ENCODE measurements at regions of chr11 and their contacts with region 1.

Region 1: GRCh38 chr11:125345421-125346178 is 150.5 kb downstream of the FEZ1 start:
- DNase-seq: peak; percentile 76
- H3K4me3 Mint-ChIP-seq: no peak overlapping the region
- H3K27ac Mint-ChIP-seq: no peak overlapping the region
- H3K4me1 Mint-ChIP-seq: peaks cover 6% of the 10 kb centered on the region
- H3K27me3 Mint-ChIP-seq: peaks cover 16% of the 10 kb centered on the region
- CTCF ChIP-seq: peak; percentile 81

Region 2: GRCh38 chr11:124152770-124153407 is 1192.7 kb before region 1 on chr11:
- CTCF ChIA-PET with region 1: no interaction called
- POLR2A ChIA-PET with region 1: no interaction called
- intact Hi-C with region 1: no loop called
- DNase-seq: no peak
- H3K4me3 Mint-ChIP-seq: no peak overlapping the region
- H3K27ac Mint-ChIP-seq: no peak overlapping the region
- H3K4me1 Mint-ChIP-seq: no peaks in the 10 kb centered on the region
- H3K27me3 Mint-ChIP-seq: peaks cover 23% of the 10 kb centered on the region
- CTCF ChIP-seq: peak; percentile 7

Region 3: DNA sequence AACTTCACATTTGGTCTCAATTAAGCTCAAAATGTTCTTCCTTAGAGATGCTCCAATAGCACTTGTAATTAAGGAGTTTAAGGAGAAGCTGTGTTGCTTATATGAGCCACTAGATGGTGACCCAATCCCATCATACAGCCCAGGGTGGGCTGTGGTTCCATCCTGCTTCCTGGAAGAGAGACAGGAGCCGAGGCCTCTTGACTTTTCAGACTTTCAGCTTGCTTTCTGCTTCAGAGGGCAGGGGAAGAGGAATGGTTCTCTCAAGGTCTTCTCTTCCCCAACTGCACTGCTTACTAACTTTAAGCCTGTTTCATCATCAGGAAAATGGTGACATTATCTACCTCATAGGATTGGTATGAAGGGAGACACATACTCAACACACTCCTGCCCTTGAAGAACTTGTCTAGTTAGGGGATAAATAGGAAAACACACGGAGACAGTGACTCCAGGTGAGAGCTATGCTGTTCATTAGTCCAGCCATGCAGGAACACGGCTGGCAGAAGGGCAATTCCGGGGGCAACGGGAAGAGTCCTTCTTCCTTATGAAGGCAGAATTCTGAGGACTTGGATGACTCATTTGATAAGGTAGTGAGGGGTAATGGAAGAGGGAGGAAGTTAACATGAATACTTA is 254.2 kb before region 1 on chr11:
- CTCF ChIA-PET with region 1: interaction called, 5 read pairs
- POLR2A ChIA-PET with region 1: no interaction called
- intact Hi-C with region 1: loop called (anchors 2 kb)
- DNase-seq: peak; percentile 40
- H3K4me3 Mint-ChIP-seq: no peak overlapping the region
- H3K27ac Mint-ChIP-seq: peak overlapping the region; percentile 13
- H3K4me1 Mint-ChIP-seq: peaks cover 13% of the 10 kb centered on the region
- H3K27me3 Mint-ChIP-seq: no peaks in the 10 kb centered on the region
- CTCF ChIP-seq: peak; percentile 42

Region 4: DNA sequence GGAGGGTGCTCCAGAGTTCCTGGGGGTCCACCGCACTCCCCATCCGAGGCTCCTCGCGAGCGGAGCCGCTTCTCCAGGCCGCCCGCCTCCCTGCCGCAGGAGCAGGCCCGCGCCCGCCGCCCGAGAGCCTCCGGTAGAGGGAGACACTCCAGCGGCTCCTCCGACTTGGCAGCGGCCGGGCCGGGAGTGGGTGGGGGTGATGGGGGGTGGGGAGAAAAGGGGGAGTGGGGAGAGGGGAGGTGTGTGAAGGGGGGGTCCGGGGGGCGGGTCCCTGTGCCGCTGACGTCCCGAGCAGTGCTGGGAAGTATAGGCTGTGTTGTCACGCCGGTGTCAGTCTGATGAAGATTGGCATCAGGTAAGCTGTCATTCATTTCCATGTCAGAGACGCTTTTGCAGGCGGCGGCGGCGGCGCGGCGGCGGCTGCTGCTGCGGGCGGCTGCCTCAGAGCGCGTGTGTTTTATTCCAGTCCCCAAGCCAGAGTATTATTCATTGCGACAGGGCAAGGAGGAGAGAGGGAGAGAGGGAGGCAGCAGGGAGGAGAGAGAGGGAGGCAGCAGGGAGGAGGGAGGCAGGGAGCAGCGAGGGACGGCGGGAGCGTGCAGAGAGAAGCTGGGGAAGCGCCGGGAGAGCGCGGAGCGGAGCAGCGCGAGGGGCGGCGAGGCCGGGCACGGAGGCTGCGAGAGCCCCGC is 181.0 kb before region 1 on chr11 and contains the start of gene PKNOX2:
- CTCF ChIA-PET with region 1: interaction called, 192 read pairs
- POLR2A ChIA-PET with region 1: interaction called, 6 read pairs
- intact Hi-C with region 1: loop called (anchors 1 kb)
- DNase-seq: peak; percentile 57
- H3K4me3 Mint-ChIP-seq: peak within 1 kb of the TSS; percentile 92
- H3K27ac Mint-ChIP-seq: no peak within 1 kb of the TSS
- H3K4me1 Mint-ChIP-seq: peaks cover 6% of the 10 kb centered on the region
- H3K27me3 Mint-ChIP-seq: peaks cover 16% of the 10 kb centered on the region
- CTCF ChIP-seq: peak; percentile 46
- total RNA-seq, gene PKNOX2: not detected in 2 replicates

Region 5: DNA sequence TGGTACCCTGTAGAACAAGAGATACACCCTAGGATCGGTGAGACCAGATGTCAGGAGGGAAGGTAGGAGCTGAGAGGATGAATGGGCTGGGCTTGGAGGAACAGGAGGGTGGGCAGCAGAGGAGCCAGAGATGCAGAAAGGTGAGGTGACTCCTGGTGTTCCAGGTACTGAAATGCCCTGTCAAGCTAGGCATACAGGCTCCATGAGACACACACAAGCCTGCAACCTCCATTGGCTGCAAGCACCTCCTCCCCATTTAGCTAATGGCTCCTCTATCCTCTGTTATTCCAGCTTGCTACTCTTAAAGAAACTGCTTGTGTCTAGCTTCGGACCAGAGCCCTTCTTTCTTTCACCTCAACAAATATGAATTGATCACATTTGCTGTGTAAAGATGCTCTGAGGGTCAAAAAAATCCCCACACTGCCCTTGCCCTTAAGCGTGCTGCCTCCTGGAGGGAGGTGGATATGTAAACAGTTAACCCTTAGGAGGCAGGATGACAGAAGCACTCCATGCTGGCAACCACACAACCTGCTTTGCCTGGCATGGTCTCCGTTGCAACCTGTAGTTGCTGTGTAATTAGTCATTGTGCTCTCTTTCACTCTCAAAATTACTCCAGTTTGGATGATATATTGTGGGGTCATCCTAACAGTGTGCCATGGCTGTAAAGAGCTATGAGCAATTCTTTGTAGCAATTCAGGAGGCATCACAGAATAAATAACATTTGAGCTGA is 25.1 kb before region 1 on chr11:
- CTCF ChIA-PET with region 1: interaction called, 26 read pairs
- POLR2A ChIA-PET with region 1: no interaction called
- intact Hi-C with region 1: no loop called
- DNase-seq: no peak
- H3K4me3 Mint-ChIP-seq: no peak overlapping the region
- H3K27ac Mint-ChIP-seq: no peak overlapping the region
- H3K4me1 Mint-ChIP-seq: no peaks in the 10 kb centered on the region
- H3K27me3 Mint-ChIP-seq: peaks cover 20% of the 10 kb centered on the region
- CTCF ChIP-seq: no peak

Region 6: GRCh38 chr11:125335106-125335505 is 10.5 kb before region 1 on chr11:
- CTCF ChIA-PET with region 1: interaction called, 16 read pairs
- POLR2A ChIA-PET with region 1: interaction called, 3 read pairs
- intact Hi-C with region 1: no loop called
- DNase-seq: no peak
- H3K4me3 Mint-ChIP-seq: no peak overlapping the region
- H3K27ac Mint-ChIP-seq: no peak overlapping the region
- H3K4me1 Mint-ChIP-seq: no peaks in the 10 kb centered on the region
- H3K27me3 Mint-ChIP-seq: peaks cover 19% of the 10 kb centered on the region
- CTCF ChIP-seq: no peak

Region 7: GRCh38 chr11:125364121-125364826 is 18.7 kb after region 1 on chr11:
- CTCF ChIA-PET with region 1: interaction called, 42 read pairs
- POLR2A ChIA-PET with region 1: no interaction called
- intact Hi-C with region 1: no loop called
- DNase-seq: no peak
- H3K4me3 Mint-ChIP-seq: no peak overlapping the region
- H3K27ac Mint-ChIP-seq: no peak overlapping the region
- H3K4me1 Mint-ChIP-seq: no peaks in the 10 kb centered on the region
- H3K27me3 Mint-ChIP-seq: no peaks in the 10 kb centered on the region
- CTCF ChIP-seq: no peak

Region 8: GRCh38 chr11:125404776-125405435 is 59.3 kb after region 1 on chr11:
- CTCF ChIA-PET with region 1: interaction called, 10 read pairs
- POLR2A ChIA-PET with region 1: no interaction called
- intact Hi-C with region 1: loop called (anchors 2 kb)
- DNase-seq: peak; percentile 55
- H3K4me3 Mint-ChIP-seq: no peak overlapping the region
- H3K27ac Mint-ChIP-seq: no peak overlapping the region
- H3K4me1 Mint-ChIP-seq: peaks cover 6% of the 10 kb centered on the region
- H3K27me3 Mint-ChIP-seq: peaks cover 85% of the 10 kb centered on the region
- CTCF ChIP-seq: peak; percentile 92

Measured in MCF 10A (cell line).